Lower leg skin (tissue), 4 donors: ENCODE measurements at regions of chr17 and their contacts with region 1.

Region 1: GRCh38 chr17:57243171-57243948 is 13.0 kb upstream of the MSI2 start:
- DNase-seq: peak; percentile 47 to 92
- H3K4me3 ChIP-seq: no peak overlapping the region
- CTCF ChIP-seq: peak in 1 of 3 donors; percentile 91
- POLR2A ChIP-seq: no peak

Region 2: DNA sequence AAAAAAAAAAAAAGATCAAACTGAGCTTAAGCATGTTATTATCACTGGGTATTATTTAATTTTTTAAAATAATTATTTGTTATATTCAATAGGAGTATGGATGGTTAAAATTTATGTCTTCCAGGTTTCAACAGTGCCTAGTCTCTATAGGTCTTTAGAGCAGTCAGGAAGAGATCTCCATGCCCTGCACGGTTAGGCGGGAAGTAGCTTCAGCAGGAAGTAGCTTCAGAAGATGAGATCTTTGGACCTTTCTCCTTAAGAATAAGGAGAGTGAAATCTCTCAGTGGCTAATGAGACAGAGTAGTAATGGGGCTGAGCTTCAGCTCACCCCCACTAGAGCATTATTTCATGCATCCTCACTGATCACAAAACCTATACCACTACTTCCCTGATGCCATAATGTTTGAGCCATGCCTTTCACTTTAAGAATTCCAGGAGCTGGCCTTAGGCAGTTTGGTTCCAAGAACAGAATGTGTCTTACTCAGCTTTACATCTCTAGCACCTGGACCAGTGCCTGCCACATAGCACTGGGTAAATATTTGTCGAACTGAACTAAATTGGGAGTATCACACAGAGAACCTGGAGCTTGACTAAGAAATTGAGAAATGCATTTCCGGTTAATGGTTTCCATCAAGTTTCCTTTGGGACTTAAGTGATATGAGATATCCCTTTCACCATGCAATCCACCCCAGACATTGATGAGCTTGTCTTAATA is 222.0 kb before region 1 on chr17:
- intact Hi-C with region 1: no loop called
- DNase-seq: no peak
- H3K4me3 ChIP-seq: no peak overlapping the region
- CTCF ChIP-seq: no peak
- POLR2A ChIP-seq: no peak

Region 3: DNA sequence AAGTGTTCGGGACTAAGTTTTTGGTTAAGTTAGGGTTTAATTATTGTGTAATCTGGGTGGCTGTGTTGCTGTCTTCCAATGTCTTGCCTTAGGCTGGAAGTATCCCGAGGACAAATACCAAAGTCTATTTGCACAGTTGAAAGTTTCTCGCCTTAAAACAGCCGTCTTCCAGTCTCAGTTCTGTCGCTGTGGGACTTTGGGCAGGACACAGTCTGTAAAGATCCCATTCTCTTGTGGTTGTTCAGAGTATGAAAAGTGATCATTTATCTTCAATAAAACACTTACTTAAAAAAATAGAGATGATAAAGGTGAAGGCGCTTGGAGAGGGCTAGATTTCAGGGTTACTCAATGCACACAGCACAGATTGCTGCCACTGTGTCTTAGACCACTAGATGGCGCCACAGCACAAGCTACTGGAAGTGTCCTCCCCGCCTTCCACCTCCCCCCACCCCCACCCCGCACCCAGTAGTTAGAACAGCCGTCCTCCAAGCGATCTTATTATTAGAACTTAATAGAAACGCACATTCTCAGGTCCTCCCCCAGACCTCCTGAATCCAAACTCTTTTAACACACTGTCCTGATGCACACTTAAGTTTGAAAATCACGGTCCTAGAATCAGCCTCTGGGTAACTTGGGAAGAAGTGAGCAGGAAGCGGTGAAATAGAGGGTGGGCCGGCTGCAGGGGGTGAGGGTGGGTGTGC is 112.4 kb before region 1 on chr17:
- intact Hi-C with region 1: loop called (anchors 10 kb)
- DNase-seq: peak; percentile 84 to 95
- H3K4me3 ChIP-seq: no peak overlapping the region
- CTCF ChIP-seq: no peak
- POLR2A ChIP-seq: no peak

Region 4: GRCh38 chr17:57261084-57261461 is 17.7 kb after region 1 on chr17:
- intact Hi-C with region 1: loop called (anchors 2 kb)
- DNase-seq: no peak
- H3K4me3 ChIP-seq: no peak overlapping the region
- CTCF ChIP-seq: no peak
- POLR2A ChIP-seq: no peak

Region 5: DNA sequence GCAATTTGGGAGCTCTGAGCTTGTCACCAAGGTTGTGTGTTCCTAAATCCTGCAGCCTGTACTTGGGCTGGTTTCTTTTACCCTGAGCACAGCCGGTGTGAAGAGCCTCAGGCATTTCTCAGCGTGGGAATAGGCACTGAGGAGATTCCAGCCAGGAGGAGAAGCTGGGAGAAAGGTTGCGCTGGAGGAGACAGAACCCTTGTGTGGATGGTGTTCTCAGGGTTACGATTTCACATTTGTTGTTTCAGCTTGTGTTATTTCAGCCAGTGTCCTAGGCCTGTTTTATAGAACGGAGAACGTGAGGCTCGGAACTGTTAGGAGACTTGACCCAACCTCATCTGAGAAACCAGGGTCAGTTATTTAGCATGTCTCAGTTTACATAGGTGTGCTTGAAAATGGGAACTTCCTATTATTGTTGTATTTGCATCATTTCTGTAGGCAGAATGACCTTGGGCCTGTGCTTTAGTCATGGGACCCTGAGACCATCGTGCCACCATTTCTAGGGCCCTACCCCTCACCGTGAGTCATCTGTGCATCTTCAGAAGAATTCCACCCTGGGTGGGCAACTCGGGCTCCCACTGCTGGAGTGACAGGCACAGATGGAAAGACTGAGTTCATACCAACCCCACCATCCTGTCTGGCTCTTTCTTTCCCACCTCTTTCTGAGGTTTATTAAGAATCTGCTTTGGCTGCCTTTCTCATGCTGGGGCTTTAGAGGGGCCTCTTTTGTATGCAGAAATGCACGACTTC is 147.9 kb after region 1 on chr17:
- intact Hi-C with region 1: no loop called
- DNase-seq: no peak
- H3K4me3 ChIP-seq: no peak overlapping the region
- CTCF ChIP-seq: no peak
- POLR2A ChIP-seq: no peak

Region 6: DNA sequence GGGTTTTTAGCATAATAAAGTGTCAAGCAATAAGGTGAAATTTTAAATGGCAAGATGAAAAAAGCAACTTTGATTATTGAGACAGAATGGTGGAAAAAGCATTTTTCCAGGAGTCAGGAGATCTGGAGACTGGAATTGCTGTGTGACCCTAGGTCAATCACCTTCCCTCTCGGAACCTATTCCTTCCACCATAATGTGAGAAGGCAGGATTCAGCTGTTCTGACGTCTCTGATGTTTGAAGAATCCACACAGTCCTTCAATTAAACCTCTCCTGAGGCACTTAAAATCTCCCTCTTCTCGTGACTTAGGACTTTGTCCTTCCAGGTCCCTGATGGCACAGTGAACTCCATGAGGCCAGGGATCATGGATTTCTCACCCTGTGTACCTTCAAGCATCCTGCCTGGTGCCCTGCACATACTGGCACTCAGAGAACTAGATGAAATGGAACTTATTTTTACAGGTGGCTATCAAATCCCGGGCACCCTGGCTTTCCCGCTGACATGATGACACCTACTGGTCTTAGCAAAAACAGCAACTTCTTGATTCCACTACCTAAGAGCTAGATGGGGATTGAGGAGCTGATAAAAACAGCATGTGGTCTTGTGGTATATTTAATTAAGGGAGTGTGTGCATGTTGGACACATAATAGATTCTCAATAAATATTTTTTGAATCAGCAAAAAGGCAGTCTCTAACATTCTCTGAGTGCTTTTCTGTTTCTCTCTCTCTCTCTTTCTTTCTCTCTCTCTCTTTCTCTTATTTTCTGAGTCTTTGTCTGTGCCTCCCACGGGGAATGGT is 504.1 kb after region 1 on chr17:
- intact Hi-C with region 1: loop called (anchors 10 kb)
- DNase-seq: peak; percentile 18 to 86
- H3K4me3 ChIP-seq: no peak overlapping the region
- CTCF ChIP-seq: no peak
- POLR2A ChIP-seq: no peak